HepG2 (cell line): ENCODE measurements at regions of chr1 and their contacts with region 1.

Region 1: GRCh38 chr1:211415700-211416099 is 76.3 kb downstream of the RD3 start:
- DNase-seq: no peak
- ATAC-seq: no peak
- H3K4me3 ChIP-seq: peak overlapping the region; percentile 36 to 63 (median 40); a peak in 4 of 6 replicates
- H3K27ac ChIP-seq: peak overlapping the region; percentile 50
- H3K4me1 ChIP-seq: peaks cover 19% of the 10 kb centered on the region
- H3K27me3 ChIP-seq: no peaks in the 10 kb centered on the region
- CTCF ChIP-seq: no peak
- EP300 ChIP-seq: no peak
- POLR2A ChIP-seq: no peak
- RAD21 ChIP-seq: no peak

Region 2: DNA sequence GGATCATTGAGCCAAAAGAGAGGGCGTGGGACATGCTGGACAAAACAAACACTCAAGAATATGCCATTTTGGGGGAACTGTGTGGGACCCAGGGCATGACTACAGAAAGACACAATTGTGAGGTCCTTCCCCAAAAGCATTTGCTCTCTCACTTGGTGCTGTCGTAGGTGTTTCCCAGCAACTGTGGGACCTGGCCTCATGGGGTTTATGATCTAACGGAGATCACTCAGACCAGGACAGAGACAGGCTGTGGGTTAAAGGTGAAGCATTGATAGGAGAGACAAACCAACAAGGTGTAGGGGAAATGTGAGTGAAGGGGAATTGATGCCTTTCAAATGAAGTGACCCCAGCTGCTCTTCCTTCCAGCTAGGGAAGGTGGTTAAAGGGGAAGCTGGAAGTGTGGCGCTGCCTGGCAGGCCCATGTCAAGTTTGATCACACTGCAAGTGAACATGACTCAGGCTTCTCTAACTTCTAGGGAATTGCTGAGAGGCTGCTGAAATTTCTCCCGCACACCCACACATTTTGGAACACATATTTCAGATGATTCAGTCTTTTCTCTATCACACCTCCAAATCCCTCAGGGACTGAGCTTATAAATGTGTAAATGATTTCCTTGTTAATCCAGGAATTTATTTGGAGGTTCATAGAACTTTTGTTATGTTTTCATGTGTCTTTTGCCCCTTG is 58.8 kb before region 1 on chr1:
- CTCF ChIA-PET with region 1: no interaction called
- POLR2A ChIA-PET with region 1: no interaction called
- in situ Hi-C with region 1: no loop called
- intact Hi-C with region 1: no loop called
- DNase-seq: no peak
- ATAC-seq: no peak
- H3K4me3 ChIP-seq: no peak overlapping the region
- H3K27ac ChIP-seq: no peak overlapping the region
- H3K4me1 ChIP-seq: peaks cover 39% of the 10 kb centered on the region
- H3K27me3 ChIP-seq: no peaks in the 10 kb centered on the region
- CTCF ChIP-seq: no peak
- EP300 ChIP-seq: no peak
- POLR2A ChIP-seq: no peak
- RAD21 ChIP-seq: no peak

Region 3: GRCh38 chr1:211469938-211470529 is 54.3 kb after region 1 on chr1:
- CTCF ChIA-PET with region 1: no interaction called
- POLR2A ChIA-PET with region 1: no interaction called
- in situ Hi-C with region 1: no loop called
- intact Hi-C with region 1: loop called (anchors 5 kb)
- DNase-seq: peak; percentile 72
- ATAC-seq: peak; percentile 100
- H3K4me3 ChIP-seq: no peak overlapping the region
- H3K27ac ChIP-seq: no peak overlapping the region
- H3K4me1 ChIP-seq: peaks cover 6% of the 10 kb centered on the region; the same call in 1 of the 2 replicates
- H3K27me3 ChIP-seq: peaks cover 0 to 12% of the 10 kb centered on the region in 2 experiments; a peak in 2 of 5 replicates
- CTCF ChIP-seq: peak; percentile 91
- EP300 ChIP-seq: no peak
- POLR2A ChIP-seq: no peak
- RAD21 ChIP-seq: peak; percentile 50

Region 4: DNA sequence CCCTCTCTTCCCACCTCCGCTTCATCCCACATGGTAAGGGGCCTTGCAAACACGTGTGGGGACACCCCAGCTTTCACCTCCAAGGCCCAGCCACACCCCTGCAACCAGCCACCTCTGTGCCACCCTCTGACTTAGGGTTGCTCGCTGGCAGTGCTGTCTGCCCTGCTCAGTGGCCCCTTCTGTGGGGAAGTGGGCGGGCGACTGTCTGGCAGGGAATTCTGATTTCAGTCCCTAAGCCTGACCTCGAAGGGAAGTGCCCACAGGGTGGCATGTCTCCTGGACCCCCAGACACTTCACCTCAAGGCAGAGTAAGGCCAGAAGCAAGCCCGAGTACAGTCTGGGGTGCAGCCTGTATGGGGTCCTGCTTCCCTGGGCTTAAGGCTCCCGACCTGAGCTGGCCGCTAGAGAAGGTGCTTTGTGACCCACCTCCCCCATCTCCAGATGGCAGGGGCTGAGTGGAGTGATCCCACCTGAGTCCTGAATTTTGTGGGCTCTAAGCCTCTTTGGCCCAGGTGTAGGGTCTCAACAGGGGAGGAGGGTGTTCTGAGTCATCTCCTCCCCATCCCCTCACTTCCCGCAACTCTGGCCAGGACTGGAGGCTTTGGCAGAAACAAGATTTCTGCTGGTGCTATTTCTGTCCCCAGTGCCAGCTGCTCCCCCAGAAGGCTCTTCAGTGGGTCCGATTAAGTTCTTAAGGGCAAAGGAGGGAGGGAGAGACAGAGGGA is 69.2 kb after region 1 on chr1:
- CTCF ChIA-PET with region 1: no interaction called
- POLR2A ChIA-PET with region 1: no interaction called
- in situ Hi-C with region 1: no loop called
- intact Hi-C with region 1: no loop called
- DNase-seq: no peak
- ATAC-seq: no peak; the same call in 2 of the 3 replicates
- H3K4me3 ChIP-seq: no peak overlapping the region
- H3K27ac ChIP-seq: no peak overlapping the region
- H3K4me1 ChIP-seq: 0 out of 2 replicates have a peak, but pooled peaks cover 3% of the 10 kb centered on the region
- H3K27me3 ChIP-seq: peaks cover 2 to 42% of the 10 kb centered on the region in 2 experiments
- CTCF ChIP-seq: no peak
- EP300 ChIP-seq: no peak
- POLR2A ChIP-seq: no peak
- RAD21 ChIP-seq: no peak

Region 5: DNA sequence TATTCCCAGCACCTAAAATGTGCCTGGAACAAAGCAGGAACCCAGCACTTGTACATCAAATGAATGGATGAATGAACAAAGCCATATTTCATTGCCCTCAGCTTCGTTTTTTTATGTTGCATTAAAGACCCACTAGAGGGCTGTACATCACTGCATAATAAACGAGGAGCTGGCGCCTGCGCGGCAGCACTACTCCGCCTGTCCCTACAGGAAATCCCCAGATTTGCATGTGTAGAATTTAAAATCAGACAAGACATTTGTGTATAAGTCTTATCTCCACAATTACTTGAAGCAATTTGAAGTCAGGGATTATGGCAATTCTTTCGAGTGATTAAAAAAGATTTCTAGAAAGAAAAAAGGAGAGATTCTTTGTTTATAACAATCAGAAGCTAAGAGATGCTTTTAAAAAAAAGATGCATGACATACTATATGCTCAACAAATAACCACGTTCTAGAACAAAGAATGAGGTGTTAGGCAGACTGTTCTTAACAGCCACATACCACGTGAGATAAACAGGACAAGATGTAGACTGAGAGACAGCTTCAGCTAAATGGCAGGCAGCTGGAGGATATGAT is 265.1 kb after region 1 on chr1:
- CTCF ChIA-PET with region 1: no interaction called
- POLR2A ChIA-PET with region 1: no interaction called
- in situ Hi-C with region 1: no loop called
- intact Hi-C with region 1: no loop called
- DNase-seq: peak; percentile 83
- ATAC-seq: peak; percentile 74
- H3K4me3 ChIP-seq: no peak overlapping the region
- H3K27ac ChIP-seq: no peak overlapping the region
- H3K4me1 ChIP-seq: peaks cover 49% of the 10 kb centered on the region
- H3K27me3 ChIP-seq: peaks cover 1 to 17% of the 10 kb centered on the region in 2 experiments; a peak in 3 of 5 replicates
- CTCF ChIP-seq: peak; percentile 88
- EP300 ChIP-seq: no peak
- POLR2A ChIP-seq: no peak
- RAD21 ChIP-seq: peak; percentile 86